ENCODE measurements at regions of chr7 and their contacts with region 1.

Region 1: GRCh38 chr7:129948877-129949291 is 3.9 kb downstream of the UBE2H start:
- DNase-seq: peak; percentile 92
- ATAC-seq: peak; percentile 69
- H3K4me3 Mint-ChIP-seq: no peak overlapping the region
- H3K27ac Mint-ChIP-seq: no peak overlapping the region
- H3K4me1 Mint-ChIP-seq: peaks cover 10% of the 10 kb centered on the region
- H3K27me3 Mint-ChIP-seq: no peaks in the 10 kb centered on the region

Region 2: DNA sequence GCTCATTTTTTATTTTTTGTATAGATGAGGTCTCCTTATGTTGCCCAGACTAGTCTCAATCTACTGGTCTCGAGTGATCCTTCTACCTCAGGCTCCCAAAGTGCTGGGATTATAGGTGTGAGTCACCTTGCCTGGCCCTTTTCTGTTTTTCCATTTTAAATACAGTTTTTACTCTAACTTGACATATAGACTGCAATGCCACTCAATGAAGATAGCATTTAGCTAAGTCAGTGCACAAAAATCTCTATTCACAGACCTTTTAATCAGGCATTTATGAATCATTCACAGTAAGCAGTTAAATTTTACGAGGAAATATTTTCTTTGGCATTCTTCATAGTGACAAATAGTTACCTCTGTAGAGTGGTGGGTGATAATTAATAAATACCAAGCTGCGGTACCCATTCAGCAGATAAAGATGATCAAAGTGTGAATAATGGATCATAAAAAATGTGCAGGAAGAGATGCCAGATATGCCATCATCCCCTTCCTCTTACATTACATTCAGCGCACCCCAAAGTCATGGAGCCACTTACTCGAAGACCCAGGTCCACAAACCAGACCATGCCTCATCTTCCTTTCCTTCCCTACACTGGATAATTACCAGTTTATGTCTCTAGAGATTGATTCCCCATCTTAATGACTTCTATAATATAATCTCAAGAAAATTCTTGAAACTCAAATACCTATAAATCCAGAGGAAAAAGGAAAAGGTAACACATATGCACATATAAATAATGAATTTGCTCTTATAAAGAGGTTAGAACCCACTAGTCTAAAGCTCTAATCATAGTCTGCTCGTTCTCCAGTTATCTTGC is 52.1 kb before region 1 on chr7:
- CTCF ChIA-PET with region 1: no interaction called
- DNase-seq: no peak
- ATAC-seq: no peak
- H3K4me3 Mint-ChIP-seq: no peak overlapping the region
- H3K27ac Mint-ChIP-seq: no peak overlapping the region
- H3K4me1 Mint-ChIP-seq: no peaks in the 10 kb centered on the region
- H3K27me3 Mint-ChIP-seq: no peaks in the 10 kb centered on the region

Region 3: GRCh38 chr7:130010689-130011412 is 62.0 kb after region 1 on chr7:
- CTCF ChIA-PET with region 1: interaction called, 14 read pairs
- DNase-seq: peak; percentile 93
- ATAC-seq: peak; percentile 70
- H3K4me3 Mint-ChIP-seq: no peak overlapping the region
- H3K27ac Mint-ChIP-seq: peak overlapping the region; percentile 75
- H3K4me1 Mint-ChIP-seq: peaks cover 12% of the 10 kb centered on the region
- H3K27me3 Mint-ChIP-seq: no peaks in the 10 kb centered on the region